Vagina (tissue), 2 donors: ENCODE measurements at regions of chr15 and their contacts with region 1.

Region 1: GRCh38 chr15:27365441-27365840 is 394.5 kb downstream of the GABRG3 start:
- DNase-seq: no peak
- H3K4me3 ChIP-seq: no peak overlapping the region
- H3K27ac ChIP-seq: no peak overlapping the region
- H3K4me1 ChIP-seq: no peaks in the 10 kb centered on the region
- H3K27me3 ChIP-seq: no peaks in the 10 kb centered on the region
- CTCF ChIP-seq: no peak
- POLR2A ChIP-seq: no peak

Region 2: GRCh38 chr15:26879706-26880105 is 485.7 kb before region 1 on chr15:
- intact Hi-C with region 1: loop called (anchors 5 kb)
- DNase-seq: no peak
- H3K4me3 ChIP-seq: no peak overlapping the region
- H3K27ac ChIP-seq: no peak overlapping the region
- H3K4me1 ChIP-seq: no peaks in the 10 kb centered on the region
- H3K27me3 ChIP-seq: no peaks in the 10 kb centered on the region
- CTCF ChIP-seq: no peak
- POLR2A ChIP-seq: no peak